Posterior vena cava (tissue), 2 donors: ENCODE measurements at regions of chr9 and their contacts with region 1.

Region 1: DNA sequence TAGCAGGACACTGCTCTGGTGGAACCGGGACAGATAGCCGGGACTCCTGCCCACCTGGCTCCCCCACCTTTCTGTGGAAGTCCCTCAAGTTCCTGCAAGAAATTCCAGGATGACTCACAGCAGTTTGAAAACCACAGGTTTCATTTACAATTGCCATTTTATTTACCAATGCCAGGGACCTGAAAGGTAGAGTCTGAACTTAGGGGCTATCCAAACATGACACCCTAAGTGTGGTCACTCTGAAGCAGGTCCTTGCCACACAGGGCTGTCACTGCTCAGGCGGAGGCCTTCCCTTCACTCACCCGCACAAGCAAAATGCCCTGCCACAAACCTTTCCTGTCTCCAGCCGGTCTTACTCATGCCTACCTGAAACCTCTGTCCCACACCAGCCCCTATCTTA is 63.3 kb upstream of the TAF1L start:
- DNase-seq: no peak

Region 2: DNA sequence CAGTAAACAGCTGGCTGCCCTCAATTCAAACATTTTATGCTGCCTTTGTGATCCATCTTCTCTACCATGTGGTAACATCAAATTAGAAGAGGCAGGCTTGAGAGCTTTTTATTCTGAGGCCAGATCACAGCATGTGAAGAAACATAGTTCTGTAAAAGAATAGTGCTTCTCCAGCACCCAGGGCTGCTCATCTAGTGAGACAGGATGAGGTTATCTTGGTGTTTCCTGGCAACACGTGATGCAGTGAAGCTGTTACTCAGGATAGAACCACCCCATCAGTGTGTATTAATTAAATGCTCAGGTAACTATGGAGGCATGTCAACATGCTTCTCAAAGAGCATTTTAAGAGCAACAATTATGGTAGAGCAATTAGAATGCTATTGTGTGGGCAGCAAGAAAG is 714.9 kb before region 1 on chr9:
- intact Hi-C with region 1: loop called in 1 of 2 experiments (anchors 10 kb)
- DNase-seq: no peak

Region 3: DNA sequence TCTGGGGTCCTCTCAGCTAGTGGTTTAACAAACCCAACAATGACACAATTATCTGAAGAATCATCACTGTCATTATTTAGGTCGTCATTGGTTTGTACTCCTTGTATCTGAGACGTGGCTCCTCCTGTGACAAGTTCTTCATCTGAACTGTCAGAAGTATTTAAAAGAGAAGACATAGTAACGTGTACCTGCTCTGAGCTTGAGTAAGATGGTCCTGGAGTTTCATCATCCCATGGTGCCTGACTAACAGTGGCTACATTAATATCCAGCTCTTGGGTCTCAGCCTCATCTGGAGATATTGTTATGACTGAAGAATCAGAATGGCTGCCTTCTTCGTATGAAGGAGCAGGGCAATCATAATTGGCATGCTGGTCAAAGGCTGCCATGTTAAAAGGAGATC is 155.7 kb before region 1 on chr9:
- intact Hi-C with region 1: no loop called
- DNase-seq: no peak